ENCODE measurements at regions of chr20 and their contacts with region 1.

Region 1: DNA sequence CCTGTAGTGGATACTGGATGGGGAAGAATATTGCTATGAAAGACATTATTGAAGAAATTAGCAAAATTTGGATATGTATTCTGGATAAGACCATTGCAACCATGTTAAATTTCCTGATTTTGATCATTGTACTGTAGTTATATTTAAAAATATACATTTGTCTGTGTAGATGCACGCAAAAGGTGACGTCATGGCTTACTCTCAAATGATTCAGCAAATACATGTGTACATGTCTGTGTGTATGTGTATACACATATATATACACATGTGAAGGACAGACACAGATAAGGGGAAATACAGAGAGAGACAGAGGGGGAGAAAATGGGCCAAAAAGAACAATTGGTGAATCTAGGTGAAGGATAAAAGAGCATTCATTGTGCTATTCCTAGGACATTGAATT is 82.3 kb upstream of the PLCB4 start:
- DNase-seq: no peak

Region 2: GRCh38 chr20:8602389-8603116 is 384.1 kb before region 1 on chr20:
- intact Hi-C with region 1: no loop called
- DNase-seq: no peak

Region 3: GRCh38 chr20:10239954-10240353 is 1253.3 kb after region 1 on chr20:
- intact Hi-C with region 1: loop called in 1 of 2 experiments (anchors 5 kb)
- DNase-seq: no peak